Astrocyte of the cerebellum (primary cell): ENCODE measurements at regions of chrX and their contacts with region 1.

Region 1: GRCh38 chrX:112008724-112009123 is 73.9 kb downstream of the TRPC5 start:
- DNase-seq: no peak
- H3K4me3 ChIP-seq: no peak overlapping the region
- CTCF ChIP-seq: no peak

Region 2: GRCh38 chrX:112058255-112058654 is 49.5 kb after region 1 on chrX:
- in situ Hi-C with region 1: loop called (anchors 5 kb)
- DNase-seq: no peak
- H3K4me3 ChIP-seq: no peak overlapping the region
- CTCF ChIP-seq: no peak